H1 (cell line): ENCODE measurements at regions of chr7 and their contacts with region 1.

Region 1: DNA sequence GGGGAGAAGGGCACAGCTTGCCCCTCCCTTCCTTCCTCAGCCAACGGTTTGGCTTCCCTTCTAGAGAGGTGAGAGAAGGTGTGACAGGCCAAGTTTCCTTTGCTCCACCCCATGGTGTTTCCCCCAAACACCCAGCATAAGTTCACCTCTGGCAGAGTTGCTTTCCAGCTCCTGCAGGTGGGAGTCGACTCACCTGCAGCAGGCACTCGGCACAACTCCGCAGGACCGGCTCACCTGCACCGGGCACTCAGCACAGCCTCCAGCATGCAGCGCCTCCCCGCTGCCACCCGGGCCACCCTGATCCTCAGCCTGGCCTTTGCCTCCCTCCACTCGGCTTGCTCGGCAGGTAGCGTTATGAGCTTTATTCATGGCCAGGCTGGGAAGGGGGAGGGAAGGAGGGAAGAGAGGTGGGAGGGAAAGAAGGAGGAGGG is at the starts of genes ATP6V0A4 and TMEM213:
- DNase-seq: peak; percentile 70 to 73
- H3K4me3 ChIP-seq: peak within 1 kb of the TSS in 1 of 4 experiments; percentile 43; a peak in 1 of 8 replicates
- H3K27ac ChIP-seq: no peak within 1 kb of the TSS
- H3K4me1 ChIP-seq: peaks cover 7 to 18% (median 9%) of the 10 kb centered on the region in 4 experiments
- H3K27me3 ChIP-seq: no peaks in the 10 kb centered on the region; a peak in 1 of 7 replicates
- CTCF ChIP-seq: peak; percentile 30 to 52 (median 33)
- EP300 ChIP-seq: no peak
- POLR2A ChIP-seq: no peak
- RAD21 ChIP-seq: peak; percentile 60 to 68
- total RNA-seq, gene ATP6V0A4: 0.47 and 0.78 TPM in 2 replicates
- total RNA-seq, gene TMEM213: 0.67 TPM in 1 of 2 replicates, not detected in the other

Region 2: DNA sequence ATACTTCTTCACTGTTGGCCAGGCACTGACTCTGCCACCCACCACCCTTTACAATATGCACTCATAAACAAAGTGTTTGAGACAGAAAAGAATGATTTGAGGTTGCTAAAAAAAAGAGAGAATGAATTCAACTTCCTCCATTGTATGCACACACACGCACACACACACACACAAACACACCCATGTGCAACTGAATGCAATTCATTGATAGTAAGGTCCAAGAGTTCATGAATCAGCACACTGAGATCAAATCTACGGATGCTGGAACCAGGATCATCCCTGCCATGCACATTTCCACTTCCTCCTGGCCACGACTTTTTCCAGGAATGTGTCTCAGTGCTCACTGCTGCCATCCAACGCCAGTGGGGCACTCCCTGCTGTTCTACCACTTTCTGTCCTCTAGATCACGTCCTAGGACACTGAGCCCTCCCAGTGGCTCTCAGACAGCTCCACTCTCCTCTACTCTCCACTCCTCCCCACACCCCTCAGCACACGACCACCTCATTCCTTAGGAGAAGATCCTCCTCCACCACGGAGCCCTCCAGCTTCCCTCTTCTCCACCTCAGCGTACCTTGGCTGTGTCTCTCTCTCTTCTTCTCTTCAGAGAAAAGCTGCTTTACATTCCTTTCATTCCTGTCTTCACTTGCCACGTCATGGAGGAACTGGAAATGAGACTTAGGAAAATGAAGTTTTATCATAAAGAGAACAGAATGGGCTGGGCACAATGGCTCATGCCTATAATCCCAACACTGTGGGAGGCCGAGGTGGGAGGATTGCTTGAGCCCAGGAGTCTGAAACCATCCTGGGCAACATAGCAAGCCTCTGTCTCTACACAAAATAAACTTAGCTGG is 12.0 kb before region 1 on chr7:
- CTCF ChIA-PET with region 1: interaction called, 15 read pairs
- POLR2A ChIA-PET with region 1: no interaction called
- DNase-seq: no peak
- H3K4me3 ChIP-seq: no peak overlapping the region
- H3K27ac ChIP-seq: no peak overlapping the region; the same call in 1 of the 2 replicates
- H3K4me1 ChIP-seq: peaks cover 0 to 4% (median 0%) of the 10 kb centered on the region in 4 experiments; a peak in 1 of 7 replicates
- H3K27me3 ChIP-seq: no peaks in the 10 kb centered on the region
- CTCF ChIP-seq: no peak
- EP300 ChIP-seq: no peak
- POLR2A ChIP-seq: no peak
- RAD21 ChIP-seq: no peak

Region 3: DNA sequence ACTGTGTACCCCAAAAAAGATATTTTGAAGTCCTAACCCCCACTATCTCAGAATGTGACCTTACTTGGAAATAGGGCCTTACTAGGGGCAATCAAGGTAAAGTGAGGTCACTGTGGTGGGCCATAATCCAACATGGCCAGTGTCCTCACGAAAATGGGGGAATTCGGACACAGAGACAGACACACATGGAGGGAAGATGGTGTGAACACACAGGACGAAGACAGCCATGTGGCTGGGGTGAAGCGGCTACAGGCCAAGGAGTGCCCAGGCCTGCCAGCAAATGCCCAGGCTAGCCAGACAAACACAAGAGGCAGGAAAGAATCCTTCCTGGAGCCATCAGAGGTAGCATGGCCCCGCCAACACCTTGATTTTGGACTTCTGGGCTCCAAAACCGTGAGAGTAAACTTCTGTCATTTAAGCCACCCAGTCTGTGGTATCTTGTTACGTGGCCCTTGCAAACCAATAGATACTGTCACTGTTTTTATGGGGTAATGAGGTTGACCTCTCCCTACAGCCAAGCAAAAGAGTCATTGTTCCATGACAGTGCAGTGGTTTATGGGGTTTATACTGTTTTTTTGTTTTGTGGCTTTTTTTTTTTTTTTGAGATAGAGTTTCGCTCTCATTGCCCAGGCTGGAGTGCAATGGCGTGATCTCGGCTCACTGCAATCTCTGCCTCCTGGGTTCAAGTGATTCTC is 150.4 kb after region 1 on chr7:
- CTCF ChIA-PET with region 1: no interaction called
- POLR2A ChIA-PET with region 1: no interaction called
- DNase-seq: no peak
- H3K4me3 ChIP-seq: no peak overlapping the region
- H3K27ac ChIP-seq: no peak overlapping the region
- H3K4me1 ChIP-seq: peaks cover 4% of the 10 kb centered on the region in 4 experiments; a peak in 5 of 7 replicates
- H3K27me3 ChIP-seq: no peaks in the 10 kb centered on the region
- CTCF ChIP-seq: no peak
- EP300 ChIP-seq: no peak
- POLR2A ChIP-seq: no peak
- RAD21 ChIP-seq: no peak